Naive thymus-derived CD4-positive, alpha-beta T cell (primary cell): ENCODE measurements at regions of chr12 and their contacts with region 1.

Region 1: DNA sequence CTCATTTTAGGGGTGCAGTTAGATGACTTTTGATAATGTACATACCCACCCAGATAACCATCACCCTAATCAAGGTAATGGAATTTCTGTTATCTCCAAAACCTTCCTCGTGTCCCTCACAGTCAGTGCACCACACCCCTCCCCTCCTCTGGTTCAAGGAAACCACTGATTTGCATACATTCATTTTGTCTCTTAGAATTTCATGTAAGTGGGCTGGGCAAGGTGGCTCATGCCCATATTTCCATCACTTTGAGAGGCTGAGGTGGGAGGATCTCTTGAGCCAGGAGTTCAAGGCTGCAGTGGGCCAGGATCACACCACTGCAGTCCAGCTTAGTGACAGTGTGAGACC is 15.7 kb downstream of the ADIPOR2 start:
- DNase-seq: no peak
- ATAC-seq: no peak
- H3K4me3 ChIP-seq: no peak overlapping the region
- H3K4me3 Mint-ChIP-seq: peak overlapping the region in 2 of 10 donors; percentile 11 to 21
- H3K27ac ChIP-seq: no peak overlapping the region
- H3K27ac Mint-ChIP-seq: peak overlapping the region in 2 of 9 donors; percentile 21 to 49
- H3K4me1 ChIP-seq: peaks cover 4 to 15% of the 10 kb centered on the region in 2 donors
- H3K4me1 Mint-ChIP-seq: peaks cover 32 to 88% (median 73%) of the 10 kb centered on the region in 7 donors
- H3K27me3 ChIP-seq: no peaks in the 10 kb centered on the region
- H3K27me3 Mint-ChIP-seq: no peaks in the 10 kb centered on the region

Region 2: GRCh38 chr12:1496162-1496900 is 210.3 kb before region 1 on chr12:
- CTCF ChIA-PET with region 1: no interaction called
- POLR2A ChIA-PET with region 1: no interaction called
- intact Hi-C with region 1: no loop called
- DNase-seq: no peak
- ATAC-seq: no peak
- H3K4me3 ChIP-seq: no peak overlapping the region
- H3K4me3 Mint-ChIP-seq: no peak overlapping the region
- H3K27ac ChIP-seq: no peak overlapping the region
- H3K27ac Mint-ChIP-seq: peak overlapping the region in 1 of 9 donors; percentile 9
- H3K4me1 ChIP-seq: no peaks in the 10 kb centered on the region
- H3K4me1 Mint-ChIP-seq: peaks cover 0 to 3% (median 0%) of the 10 kb centered on the region in 7 donors
- H3K27me3 ChIP-seq: no peaks in the 10 kb centered on the region
- H3K27me3 Mint-ChIP-seq: no peaks in the 10 kb centered on the region

Region 3: GRCh38 chr12:1744932-1745331 is 38.3 kb after region 1 on chr12:
- CTCF ChIA-PET with region 1: no interaction called
- POLR2A ChIA-PET with region 1: no interaction called
- intact Hi-C with region 1: loop called in 1 of 2 experiments (anchors 5 kb)
- DNase-seq: no peak
- ATAC-seq: no peak
- H3K4me3 ChIP-seq: no peak overlapping the region
- H3K4me3 Mint-ChIP-seq: no peak overlapping the region
- H3K27ac ChIP-seq: no peak overlapping the region
- H3K27ac Mint-ChIP-seq: no peak overlapping the region
- H3K4me1 ChIP-seq: peaks cover 0 to 16% of the 10 kb centered on the region in 2 donors
- H3K4me1 Mint-ChIP-seq: peaks cover 4 to 52% (median 28%) of the 10 kb centered on the region in 7 donors
- H3K27me3 ChIP-seq: no peaks in the 10 kb centered on the region
- H3K27me3 Mint-ChIP-seq: no peaks in the 10 kb centered on the region

Region 4: DNA sequence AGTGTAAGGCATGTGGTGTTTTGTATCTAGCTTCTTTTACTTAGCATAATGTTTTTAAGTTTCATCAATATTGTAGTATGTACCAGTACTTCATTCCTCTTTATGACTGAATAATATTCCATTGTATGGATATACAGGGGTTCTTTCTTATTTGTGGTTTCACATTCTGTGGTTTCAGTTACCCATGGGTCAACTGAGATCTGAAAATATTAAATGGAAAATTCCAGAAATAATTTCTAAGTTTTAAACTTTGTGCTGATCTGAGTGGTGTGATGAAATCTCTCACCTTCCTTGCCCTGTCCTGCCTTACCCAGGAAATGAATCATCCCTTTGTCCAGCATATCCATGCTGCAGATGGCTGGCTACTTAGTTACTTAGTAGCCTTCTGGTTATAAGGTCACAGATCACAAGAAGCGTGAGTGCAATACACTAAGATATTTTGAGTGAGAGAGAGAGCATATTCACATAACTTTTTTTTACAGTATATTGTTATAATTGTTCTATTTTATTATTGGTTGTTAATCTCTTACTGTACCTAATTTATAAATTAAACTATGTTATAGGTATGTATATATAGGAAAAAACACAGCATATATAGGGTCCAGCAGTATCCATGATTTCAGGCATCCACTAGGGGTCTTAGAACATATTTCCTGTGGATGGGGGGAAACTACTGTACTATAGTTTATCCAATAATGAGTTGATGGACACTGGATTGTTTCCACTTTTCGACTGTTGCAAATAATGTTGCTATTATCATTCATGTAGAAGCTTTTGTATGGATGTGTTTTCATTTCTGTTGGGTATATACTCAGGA is 54.2 kb after region 1 on chr12:
- CTCF ChIA-PET with region 1: no interaction called
- POLR2A ChIA-PET with region 1: no interaction called
- intact Hi-C with region 1: loop called in 1 of 2 experiments (anchors 5 kb)
- DNase-seq: no peak
- ATAC-seq: no peak
- H3K4me3 ChIP-seq: no peak overlapping the region
- H3K4me3 Mint-ChIP-seq: no peak overlapping the region
- H3K27ac ChIP-seq: no peak overlapping the region
- H3K27ac Mint-ChIP-seq: no peak overlapping the region
- H3K4me1 ChIP-seq: no peaks in the 10 kb centered on the region
- H3K4me1 Mint-ChIP-seq: peaks cover 7 to 24% (median 17%) of the 10 kb centered on the region in 7 donors
- H3K27me3 ChIP-seq: no peaks in the 10 kb centered on the region
- H3K27me3 Mint-ChIP-seq: no peaks in the 10 kb centered on the region

Region 5: GRCh38 chr12:1776170-1776948 is 69.8 kb after region 1 on chr12:
- CTCF ChIA-PET with region 1: no interaction called
- POLR2A ChIA-PET with region 1: no interaction called
- intact Hi-C with region 1: loop called in 1 of 2 experiments (anchors 5 kb)
- DNase-seq: no peak
- ATAC-seq: no peak
- H3K4me3 ChIP-seq: no peak overlapping the region
- H3K4me3 Mint-ChIP-seq: no peak overlapping the region
- H3K27ac ChIP-seq: no peak overlapping the region
- H3K27ac Mint-ChIP-seq: peak overlapping the region in 3 of 9 donors; percentile 13 to 46 (median 43)
- H3K4me1 ChIP-seq: no peaks in the 10 kb centered on the region
- H3K4me1 Mint-ChIP-seq: peaks cover 2 to 22% (median 20%) of the 10 kb centered on the region in 7 donors
- H3K27me3 ChIP-seq: no peaks in the 10 kb centered on the region
- H3K27me3 Mint-ChIP-seq: no peaks in the 10 kb centered on the region